PC-9 (cell line): ENCODE measurements at regions of chr22 and their contacts with region 1.

Region 1: DNA sequence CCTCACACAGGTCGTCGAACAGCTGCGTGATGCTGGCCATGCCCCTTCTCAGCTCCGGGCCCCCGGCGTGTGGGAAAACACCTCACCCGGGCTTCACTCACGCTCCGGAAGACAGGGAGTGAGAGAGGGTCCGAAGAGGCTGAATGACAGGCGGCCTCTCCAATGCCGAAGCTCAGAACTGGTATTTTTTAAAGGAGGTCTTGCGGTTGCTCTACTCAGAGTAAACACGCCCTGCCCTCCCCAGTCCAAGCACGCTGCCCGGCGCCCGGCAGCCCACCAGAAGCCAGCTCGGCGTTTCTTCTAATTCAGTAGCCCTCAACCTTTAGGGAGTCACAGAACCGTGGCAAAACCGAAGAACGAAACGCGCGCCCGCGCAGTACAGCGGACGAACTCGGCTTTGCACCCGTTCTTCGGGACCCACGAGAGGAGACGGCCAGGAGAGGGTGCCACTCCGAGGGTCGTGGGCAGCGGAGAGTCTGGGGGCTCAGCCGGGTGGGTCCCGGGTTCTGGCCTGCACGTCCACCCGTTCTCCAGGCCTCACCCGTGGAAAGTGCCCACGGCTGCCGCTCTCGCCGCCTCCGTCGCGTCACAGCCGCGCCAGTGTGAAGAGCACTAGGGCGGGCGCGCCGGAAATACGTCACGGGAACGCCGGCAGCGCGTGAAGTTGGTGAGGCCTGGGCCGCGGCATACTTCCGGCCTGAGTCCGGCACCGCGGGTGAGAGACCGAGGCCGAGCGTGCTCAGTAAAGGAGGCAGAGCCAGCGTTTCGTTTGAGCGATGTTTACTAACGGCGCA is at the start of gene TUBGCP6:
- DNase-seq: peak; percentile 91 to 93
- H3K4me3 ChIP-seq: peak within 1 kb of the TSS; percentile 86
- H3K27ac ChIP-seq: peak within 1 kb of the TSS; percentile 69
- H3K4me1 ChIP-seq: peaks cover 37% of the 10 kb centered on the region
- H3K27me3 ChIP-seq: no peaks in the 10 kb centered on the region
- CTCF ChIP-seq: peak; percentile 27; the same call in 1 of the 2 replicates
- total RNA-seq, gene TUBGCP6: 31.3 and 34.8 TPM in 2 replicates

Region 2: DNA sequence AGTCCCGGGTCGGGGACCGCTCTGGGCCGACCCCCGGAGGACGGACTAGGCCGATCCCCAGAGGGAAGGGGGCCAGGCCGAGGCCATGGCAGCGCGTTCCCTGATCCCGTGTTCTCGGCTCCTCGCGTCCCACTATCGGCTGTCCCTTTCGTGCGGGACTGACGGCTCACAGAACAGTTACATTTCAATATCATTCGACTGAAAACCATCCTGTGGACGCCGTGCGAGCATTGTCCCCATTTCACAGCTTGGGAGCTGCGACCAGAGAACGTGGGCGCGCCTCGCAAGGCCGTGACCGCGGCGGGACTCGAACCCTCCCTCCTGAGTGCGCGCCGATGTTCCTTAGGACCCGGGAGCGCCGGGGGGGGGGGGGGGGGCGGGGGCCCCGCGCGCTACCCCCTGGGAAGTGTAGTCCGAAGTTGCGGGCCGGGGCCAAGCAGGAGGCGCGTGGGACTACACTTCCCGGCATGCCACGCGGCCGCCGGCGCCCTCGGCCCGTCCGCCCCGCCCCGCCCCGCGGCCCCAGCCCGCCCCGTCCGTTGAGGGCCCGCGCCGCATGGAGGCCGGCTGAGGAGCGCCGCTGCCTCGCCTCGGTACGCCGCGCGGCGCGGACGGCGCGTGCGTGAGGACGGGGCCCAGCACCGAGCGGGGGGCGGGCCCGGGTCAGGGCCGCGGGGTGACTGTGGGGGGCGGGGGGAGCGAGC is 59.1 kb before region 1 on chr22 and contains the start of gene TRABD:
- CTCF ChIA-PET with region 1: no interaction called
- POLR2A ChIA-PET with region 1: no interaction called
- intact Hi-C with region 1: no loop called
- DNase-seq: peak; percentile 71 to 88
- H3K4me3 ChIP-seq: peak within 1 kb of the TSS; percentile 75
- H3K27ac ChIP-seq: no peak within 1 kb of the TSS
- H3K4me1 ChIP-seq: peaks cover 37% of the 10 kb centered on the region
- H3K27me3 ChIP-seq: no peaks in the 10 kb centered on the region
- CTCF ChIP-seq: no peak
- total RNA-seq, gene TRABD: 68.2 and 78.8 TPM in 2 replicates

Region 3: GRCh38 chr22:50326959-50327710 is 82.5 kb after region 1 on chr22 and contains the start of gene DENND6B:
- CTCF ChIA-PET with region 1: no interaction called
- POLR2A ChIA-PET with region 1: no interaction called
- intact Hi-C with region 1: loop called (anchors 2 kb)
- DNase-seq: peak; percentile 62 to 80
- H3K4me3 ChIP-seq: peak within 1 kb of the TSS; percentile 92
- H3K27ac ChIP-seq: peak within 1 kb of the TSS; percentile 46
- H3K4me1 ChIP-seq: peaks cover 33% of the 10 kb centered on the region
- H3K27me3 ChIP-seq: no peaks in the 10 kb centered on the region
- CTCF ChIP-seq: peak; percentile 61
- total RNA-seq, gene DENND6B: 12.1 and 14.3 TPM in 2 replicates

Region 4: GRCh38 chr22:50691521-50691920 is 446.9 kb after region 1 on chr22:
- CTCF ChIA-PET with region 1: no interaction called
- POLR2A ChIA-PET with region 1: no interaction called
- intact Hi-C with region 1: loop called (anchors 2 kb)
- DNase-seq: peak in 1 of 2 experiments; percentile 33
- H3K4me3 ChIP-seq: no peak overlapping the region
- H3K27ac ChIP-seq: no peak overlapping the region
- H3K4me1 ChIP-seq: no peaks in the 10 kb centered on the region
- H3K27me3 ChIP-seq: no peaks in the 10 kb centered on the region
- CTCF ChIP-seq: peak; percentile 89